HEK293 (cell line): ENCODE measurements at regions of chr7 and their contacts with region 1.

Region 1: DNA sequence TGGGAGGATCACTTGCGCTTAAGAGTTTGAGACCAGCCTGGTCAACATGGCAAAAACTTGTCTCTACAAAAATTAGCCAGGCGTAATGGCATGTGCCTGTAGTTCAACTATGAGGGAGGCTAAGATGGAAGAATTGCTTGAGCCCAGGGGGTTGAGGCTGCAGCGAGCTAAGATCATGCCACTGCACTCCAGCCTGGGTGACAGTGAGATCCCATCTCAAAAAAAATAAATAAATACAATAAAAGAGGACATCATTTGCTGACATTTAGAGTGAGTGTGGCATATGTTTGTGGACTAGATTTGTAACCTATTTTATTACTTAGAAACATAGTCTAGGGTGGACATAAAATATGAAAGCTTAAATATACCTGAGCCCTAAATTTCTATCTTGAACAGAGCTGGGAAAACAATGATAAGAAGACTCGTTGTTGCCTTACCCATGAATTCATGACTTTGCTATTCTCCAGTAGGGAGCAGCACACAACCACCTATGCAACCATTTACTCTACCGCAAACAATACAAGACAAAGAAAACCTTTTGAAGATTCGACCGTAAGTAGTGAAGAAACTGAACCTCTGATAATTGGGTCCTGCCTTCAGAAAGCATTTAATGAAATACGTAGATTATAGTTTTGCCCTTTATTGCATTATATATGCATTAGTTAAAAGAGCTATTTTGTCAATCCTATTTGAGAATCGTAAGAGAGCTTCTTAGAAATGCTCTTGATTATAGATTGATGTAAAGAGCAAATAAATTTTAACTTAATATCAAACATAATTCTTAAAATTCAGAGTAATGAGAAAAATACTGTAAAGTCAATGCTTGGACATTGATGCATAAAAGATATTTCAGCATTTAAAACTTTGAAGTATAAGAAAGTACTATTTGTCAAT is 83.5 kb downstream of the GNAT3 start:
- H3K4me3 ChIP-seq: no peak overlapping the region
- H3K27ac ChIP-seq: no peak overlapping the region
- H3K4me1 ChIP-seq: no peaks in the 10 kb centered on the region
- CTCF ChIP-seq: peak; percentile 51; the same call in 1 of the 2 replicates

Region 2: GRCh38 chr7:80218723-80219122 is 209.7 kb before region 1 on chr7:
- CTCF ChIA-PET with region 1: no interaction called
- POLR2A ChIA-PET with region 1: no interaction called
- H3K4me3 ChIP-seq: no peak overlapping the region
- H3K27ac ChIP-seq: no peak overlapping the region
- H3K4me1 ChIP-seq: no peaks in the 10 kb centered on the region
- CTCF ChIP-seq: no peak

Region 3: GRCh38 chr7:80324032-80324431 is 104.4 kb before region 1 on chr7:
- CTCF ChIA-PET with region 1: no interaction called
- POLR2A ChIA-PET with region 1: no interaction called
- H3K4me3 ChIP-seq: no peak overlapping the region
- H3K27ac ChIP-seq: no peak overlapping the region
- H3K4me1 ChIP-seq: no peaks in the 10 kb centered on the region
- CTCF ChIP-seq: no peak

Region 4: GRCh38 chr7:80659120-80660055 is 231.0 kb after region 1 on chr7:
- CTCF ChIA-PET with region 1: interaction called, 11 read pairs
- POLR2A ChIA-PET with region 1: no interaction called
- H3K4me3 ChIP-seq: no peak overlapping the region
- H3K27ac ChIP-seq: no peak overlapping the region
- H3K4me1 ChIP-seq: no peaks in the 10 kb centered on the region
- CTCF ChIP-seq: no peak

Region 5: DNA sequence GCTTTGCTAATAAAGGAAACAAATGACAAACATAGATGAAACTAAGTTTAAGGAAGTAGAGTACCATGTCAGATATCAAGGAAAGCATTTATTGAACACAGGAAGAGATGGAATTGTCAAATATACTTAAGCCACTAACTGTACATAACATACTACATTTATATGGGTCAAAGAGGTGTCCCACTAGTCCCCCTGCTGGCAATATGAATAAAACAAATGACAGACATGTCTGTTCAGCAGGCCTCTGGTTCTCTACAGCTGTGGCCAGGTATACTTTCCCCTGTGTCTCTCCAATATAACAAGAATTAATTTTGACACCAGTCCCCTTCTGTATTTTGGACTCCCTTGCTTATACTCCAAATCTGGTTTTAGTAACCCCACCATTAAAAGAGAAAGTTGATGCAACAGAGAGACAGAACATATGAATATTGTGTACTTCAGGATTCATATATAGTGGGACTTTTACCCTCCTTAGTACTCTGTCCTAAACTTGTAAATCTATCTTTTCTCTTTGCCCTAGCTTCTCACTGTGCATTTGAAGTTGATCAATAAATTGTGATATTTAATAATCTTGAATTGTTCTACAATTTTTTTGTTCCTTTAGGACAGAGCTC is 253.0 kb after region 1 on chr7:
- CTCF ChIA-PET with region 1: interaction called, 22 read pairs
- POLR2A ChIA-PET with region 1: no interaction called
- H3K4me3 ChIP-seq: no peak overlapping the region
- H3K27ac ChIP-seq: no peak overlapping the region
- H3K4me1 ChIP-seq: no peaks in the 10 kb centered on the region
- CTCF ChIP-seq: no peak